ENCODE measurements at regions of chrX and their contacts with region 1.

Region 1: GRCh38 chrX:52261463-52262194 is 76.9 kb downstream of the MAGED4 start:
- DNase-seq: peak; percentile 98
- H3K4me3 ChIP-seq: peak overlapping the region; percentile 28 to 56 (median 50)
- H3K27ac ChIP-seq: peak overlapping the region; percentile 82 to 86 (median 85)
- H3K4me1 ChIP-seq: peaks cover 0 to 10% (median 2%) of the 10 kb centered on the region in 4 donors
- H3K27me3 ChIP-seq: no peaks in the 10 kb centered on the region
- CTCF ChIP-seq: peak; percentile 79 to 99 (median 94)
- EP300 ChIP-seq: no peak
- POLR2A ChIP-seq: no peak

Region 2: DNA sequence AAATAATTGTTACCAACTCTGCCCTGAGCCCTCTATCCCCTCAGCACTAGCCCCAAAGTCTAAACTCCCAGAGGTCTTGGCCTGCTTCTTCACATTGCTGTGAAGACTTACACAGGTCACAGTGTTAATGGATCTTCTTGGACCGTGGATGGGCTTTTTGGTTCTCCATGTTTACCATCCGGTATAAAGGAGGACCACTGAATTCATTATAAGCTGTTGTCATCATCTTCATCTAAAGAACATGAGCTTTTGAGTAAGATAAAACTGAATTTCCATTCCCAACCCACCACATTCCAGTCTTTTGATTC is 773.7 kb before region 1 on chrX:
- intact Hi-C with region 1: loop called (anchors 5 kb)
- DNase-seq: no peak
- H3K4me3 ChIP-seq: no peak overlapping the region
- H3K27ac ChIP-seq: no peak overlapping the region
- H3K4me1 ChIP-seq: no peaks in the 10 kb centered on the region
- H3K27me3 ChIP-seq: no peaks in the 10 kb centered on the region
- CTCF ChIP-seq: no peak
- EP300 ChIP-seq: no peak
- POLR2A ChIP-seq: no peak

Measured in sigmoid colon (tissue), 7 donors.